ENCODE measurements at regions of chr13 and their contacts with region 1.

Region 1: DNA sequence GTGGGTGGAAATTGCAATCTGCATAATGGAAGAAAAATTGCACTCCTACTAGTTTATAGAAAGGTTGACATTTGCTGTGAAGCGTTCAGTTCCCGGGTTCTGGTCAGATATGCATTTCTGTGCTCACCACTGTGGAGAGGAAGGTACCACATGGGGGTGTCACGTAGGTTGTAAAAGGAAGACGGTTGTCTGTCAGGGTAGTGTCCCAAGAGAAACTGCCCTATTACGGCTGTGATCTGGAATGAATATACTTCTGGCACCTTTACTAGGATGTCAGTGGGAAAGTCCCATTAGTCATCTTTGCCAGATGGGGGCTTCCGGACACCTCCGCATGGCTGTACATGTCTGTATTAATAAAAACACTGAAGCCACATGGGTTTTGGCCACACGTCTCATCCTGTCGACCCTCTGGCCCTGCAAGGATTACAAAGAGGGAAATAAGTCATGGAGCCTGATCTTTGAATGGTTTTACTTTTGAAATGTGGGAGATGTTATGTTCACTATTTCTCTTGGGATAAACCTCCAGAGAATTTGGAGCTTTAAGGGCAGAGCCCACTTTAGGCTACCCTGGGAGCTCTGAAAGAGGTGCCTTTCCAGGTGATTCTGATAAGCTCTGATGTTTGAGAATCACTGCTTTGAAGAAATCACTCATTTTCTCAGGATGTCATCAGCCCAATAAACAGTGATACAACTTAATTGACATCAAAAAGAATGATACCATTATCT is 133.9 kb downstream of the AKAP11 start:
- DNase-seq: peak; percentile 89
- H3K4me3 Mint-ChIP-seq: peak overlapping the region; percentile 59
- H3K27ac Mint-ChIP-seq: peak overlapping the region; percentile 93
- H3K4me1 Mint-ChIP-seq: peaks cover 75% of the 10 kb centered on the region
- H3K27me3 Mint-ChIP-seq: no peaks in the 10 kb centered on the region

Region 2: DNA sequence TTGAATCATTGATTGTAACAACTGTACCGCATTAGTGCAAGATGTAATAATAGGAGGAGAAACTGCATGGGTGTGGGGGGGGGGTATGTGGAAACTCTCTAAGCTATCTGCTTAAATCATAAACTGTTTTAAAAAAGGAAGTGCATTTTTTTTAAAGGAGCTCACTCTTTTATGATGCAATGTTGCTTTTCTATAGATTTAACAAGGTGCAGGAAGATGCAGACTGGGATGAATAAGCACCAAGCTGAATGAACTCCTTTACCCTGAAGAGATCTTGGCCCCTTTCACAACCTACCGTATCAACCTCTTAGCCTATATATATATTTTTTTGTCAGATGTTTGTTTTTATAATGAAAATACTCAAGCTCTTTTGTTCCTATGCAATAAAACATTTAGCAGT is 38.0 kb before region 1 on chr13:
- CTCF ChIA-PET with region 1: no interaction called
- POLR2A ChIA-PET with region 1: interaction called, 6 read pairs
- intact Hi-C with region 1: loop called (anchors 1 kb)
- DNase-seq: no peak
- H3K4me3 Mint-ChIP-seq: no peak overlapping the region
- H3K27ac Mint-ChIP-seq: no peak overlapping the region
- H3K4me1 Mint-ChIP-seq: peaks cover 47% of the 10 kb centered on the region
- H3K27me3 Mint-ChIP-seq: no peaks in the 10 kb centered on the region

Region 3: GRCh38 chr13:42377640-42378382 is 28.0 kb before region 1 on chr13:
- CTCF ChIA-PET with region 1: interaction called, 4 read pairs
- POLR2A ChIA-PET with region 1: interaction called, 20 read pairs
- intact Hi-C with region 1: loop called (anchors 1 kb)
- DNase-seq: peak; percentile 61
- H3K4me3 Mint-ChIP-seq: peak overlapping the region; percentile 30
- H3K27ac Mint-ChIP-seq: peak overlapping the region; percentile 92
- H3K4me1 Mint-ChIP-seq: peaks cover 61% of the 10 kb centered on the region
- H3K27me3 Mint-ChIP-seq: no peaks in the 10 kb centered on the region

Region 4: DNA sequence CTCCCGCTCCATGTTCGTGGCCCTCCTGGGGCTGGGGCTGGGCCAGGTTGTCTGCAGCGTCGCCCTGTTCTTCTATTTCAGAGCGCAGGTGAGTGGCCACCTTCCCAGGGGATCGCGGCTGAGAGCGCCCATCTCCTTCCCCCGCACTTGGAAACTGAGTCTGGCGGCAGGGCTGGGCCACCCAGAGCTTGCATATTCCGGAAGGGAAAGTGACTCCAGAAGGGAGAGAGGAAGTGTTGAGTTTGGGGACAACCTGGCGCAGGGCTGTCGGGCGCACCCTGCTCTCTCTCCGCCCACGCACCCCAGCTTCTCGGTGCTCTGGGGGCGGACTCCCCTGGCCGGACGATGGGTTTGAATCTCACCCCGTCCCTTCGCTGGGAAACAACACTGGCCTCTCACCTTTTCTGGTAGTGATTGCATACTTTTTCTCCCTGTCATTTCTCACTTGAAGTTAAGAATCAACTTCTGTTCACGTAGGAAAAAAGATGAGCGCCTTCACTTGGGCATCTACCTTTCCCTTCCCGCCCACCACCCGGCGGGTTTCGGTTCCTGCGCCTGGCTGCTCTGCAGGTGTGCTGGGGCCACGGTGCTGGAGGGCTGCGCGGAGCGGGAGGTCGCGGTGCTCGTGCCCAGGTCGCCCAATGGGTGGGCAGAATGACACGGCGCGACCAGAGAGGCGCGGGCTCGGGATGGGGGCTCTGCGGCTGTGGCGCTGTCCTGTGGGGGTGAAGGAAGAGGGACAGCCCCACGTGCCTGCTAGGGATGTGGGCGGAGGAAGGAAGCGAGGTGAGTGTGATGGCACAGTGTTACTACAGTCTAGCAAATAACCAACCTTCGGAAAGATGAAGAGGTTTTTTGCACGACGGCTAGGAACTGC is 168.8 kb after region 1 on chr13:
- CTCF ChIA-PET with region 1: no interaction called
- POLR2A ChIA-PET with region 1: no interaction called
- intact Hi-C with region 1: loop called (anchors 2 kb)
- DNase-seq: peak; percentile 75
- H3K4me3 Mint-ChIP-seq: peak overlapping the region; percentile 73
- H3K27ac Mint-ChIP-seq: peak overlapping the region; percentile 55
- H3K4me1 Mint-ChIP-seq: peaks cover 34% of the 10 kb centered on the region
- H3K27me3 Mint-ChIP-seq: peaks cover 26% of the 10 kb centered on the region